Activated T-helper 2 cell treated with anti-CD3 and anti-CD28 coated beads, Interferon-gamma antibody, Interleukin-2, Interleukin-4, amounts not matched to agents 10 μg/mL and 5 μg/mL and 100 μg/mL, durations not matched to agents 14 hours and 24 hours and 36 hours (primary cell): ENCODE measurements at regions of chr1 and their contacts with region 1.

Region 1: GRCh38 chr1:200150720-200151119 is 123.2 kb downstream of the NR5A2 start:
- DNase-seq: no peak
- H3K4me3 Mint-ChIP-seq: no peak overlapping the region
- H3K27ac Mint-ChIP-seq: peak overlapping the region; percentile 73
- H3K4me1 Mint-ChIP-seq: peaks cover 47% of the 10 kb centered on the region
- H3K27me3 Mint-ChIP-seq: no peaks in the 10 kb centered on the region

Region 2: DNA sequence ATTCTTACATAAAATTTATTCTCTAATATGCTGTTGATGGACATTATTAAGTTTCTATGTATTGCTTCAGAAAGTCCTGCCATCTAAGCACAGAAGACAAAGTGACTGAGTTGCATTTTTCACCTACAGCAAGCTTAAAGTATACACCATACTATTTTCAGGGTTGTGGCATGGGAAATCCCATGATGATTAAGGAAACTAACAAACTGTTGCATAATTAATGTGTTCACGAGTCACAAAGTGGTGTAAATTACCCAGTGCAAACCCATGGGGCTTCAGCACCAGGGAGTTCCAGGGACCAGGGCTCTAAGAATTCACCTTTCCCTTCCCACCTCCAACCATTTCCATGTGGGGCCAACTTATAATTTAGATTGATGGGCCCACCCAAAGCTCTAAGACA is 205.1 kb before region 1 on chr1:
- intact Hi-C with region 1: loop called (anchors 1 kb)
- DNase-seq: no peak
- H3K4me3 Mint-ChIP-seq: no peak overlapping the region
- H3K27ac Mint-ChIP-seq: no peak overlapping the region
- H3K4me1 Mint-ChIP-seq: peaks cover 14% of the 10 kb centered on the region
- H3K27me3 Mint-ChIP-seq: peaks cover 47% of the 10 kb centered on the region

Region 3: GRCh38 chr1:200253774-200254495 is 103.2 kb after region 1 on chr1:
- intact Hi-C with region 1: loop called (anchors 1 kb)
- DNase-seq: no peak
- H3K4me3 Mint-ChIP-seq: no peak overlapping the region
- H3K27ac Mint-ChIP-seq: no peak overlapping the region
- H3K4me1 Mint-ChIP-seq: peaks cover 11% of the 10 kb centered on the region
- H3K27me3 Mint-ChIP-seq: peaks cover 33% of the 10 kb centered on the region

Region 4: GRCh38 chr1:200274116-200274515 is 123.4 kb after region 1 on chr1:
- intact Hi-C with region 1: loop called (anchors 5 kb)
- DNase-seq: no peak
- H3K4me3 Mint-ChIP-seq: no peak overlapping the region
- H3K27ac Mint-ChIP-seq: no peak overlapping the region
- H3K4me1 Mint-ChIP-seq: peaks cover 8% of the 10 kb centered on the region
- H3K27me3 Mint-ChIP-seq: peaks cover 18% of the 10 kb centered on the region

Region 5: DNA sequence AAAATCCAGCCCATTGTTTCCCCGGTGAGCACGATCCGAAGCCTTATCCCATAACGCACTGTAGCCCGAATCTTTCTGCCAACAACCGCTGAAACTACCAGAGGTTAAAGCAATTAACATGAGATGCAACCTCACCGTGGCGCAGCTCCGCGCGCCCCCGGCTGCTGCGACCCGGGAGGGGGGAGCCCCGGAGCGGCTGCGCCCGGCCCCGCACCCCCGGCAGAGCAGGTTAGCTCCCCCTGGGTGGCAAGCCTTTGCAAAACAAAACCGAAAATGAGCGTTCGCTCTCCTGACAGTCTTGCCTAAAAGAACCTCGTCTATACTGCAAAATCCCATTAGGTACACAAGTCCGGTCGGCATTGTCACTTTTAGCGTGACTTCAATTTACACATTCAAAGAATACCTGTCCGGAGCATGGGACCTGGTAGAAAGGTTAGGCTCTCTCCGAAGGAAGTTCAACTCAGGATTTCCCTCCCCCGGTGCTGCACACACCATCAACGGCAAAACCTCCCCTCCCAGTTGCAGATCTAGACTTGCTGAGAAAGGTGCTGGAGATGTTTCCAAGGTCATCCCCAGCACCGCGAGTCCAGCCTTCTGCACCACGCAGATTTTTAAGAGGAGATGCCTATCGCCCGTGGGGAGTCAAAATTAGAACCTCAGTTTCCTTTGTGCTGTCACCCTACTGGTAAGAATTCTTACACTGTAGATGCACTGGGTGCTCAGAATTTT is 151.6 kb after region 1 on chr1:
- intact Hi-C with region 1: loop called (anchors 5 kb)
- DNase-seq: peak; percentile 52
- H3K4me3 Mint-ChIP-seq: peak overlapping the region; percentile 77
- H3K27ac Mint-ChIP-seq: no peak overlapping the region
- H3K4me1 Mint-ChIP-seq: peaks cover 23% of the 10 kb centered on the region
- H3K27me3 Mint-ChIP-seq: peaks cover 54% of the 10 kb centered on the region

Region 6: DNA sequence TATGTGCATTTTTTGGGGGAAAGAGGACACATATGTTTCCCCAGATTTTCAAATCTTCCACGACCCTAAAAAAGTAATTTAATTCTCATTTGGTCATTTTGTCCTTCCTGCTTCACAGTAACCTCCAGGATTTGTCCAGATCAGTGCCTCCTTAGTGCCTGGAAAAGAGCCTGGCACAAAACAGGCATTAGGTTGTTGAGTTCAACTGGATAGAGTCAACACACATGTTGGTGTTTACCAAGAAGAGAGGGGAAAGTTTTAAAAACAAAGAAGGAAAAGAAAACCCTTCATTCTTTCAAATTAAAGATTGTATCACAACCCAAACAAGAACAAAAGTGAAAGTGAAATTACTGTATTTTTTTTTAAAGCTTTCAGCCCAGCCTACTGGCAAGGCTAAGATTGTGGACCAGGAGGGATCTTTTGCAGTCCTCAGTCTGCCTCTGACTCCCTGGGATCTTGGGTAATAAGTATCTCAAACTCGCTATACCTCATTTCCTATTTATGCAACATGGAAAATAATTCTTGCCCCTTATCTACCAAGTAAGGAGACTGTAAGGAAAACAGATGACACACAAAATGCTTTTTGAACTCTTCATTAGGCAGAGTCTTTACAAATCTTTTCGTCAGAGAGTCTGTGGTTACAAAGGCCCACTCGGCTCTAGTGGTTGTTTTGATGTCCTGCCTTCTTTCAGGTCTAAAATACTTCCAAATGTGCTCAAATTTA is 201.3 kb after region 1 on chr1:
- intact Hi-C with region 1: loop called (anchors 5 kb)
- DNase-seq: no peak
- H3K4me3 Mint-ChIP-seq: peak overlapping the region; percentile 34
- H3K27ac Mint-ChIP-seq: peak overlapping the region; percentile 24
- H3K4me1 Mint-ChIP-seq: peaks cover 44% of the 10 kb centered on the region
- H3K27me3 Mint-ChIP-seq: peaks cover 5% of the 10 kb centered on the region

Region 7: GRCh38 chr1:200448034-200448762 is 297.5 kb after region 1 on chr1:
- intact Hi-C with region 1: loop called (anchors 1 kb)
- DNase-seq: no peak
- H3K4me3 Mint-ChIP-seq: peak overlapping the region; percentile 6
- H3K27ac Mint-ChIP-seq: peak overlapping the region; percentile 92
- H3K4me1 Mint-ChIP-seq: peaks cover 38% of the 10 kb centered on the region
- H3K27me3 Mint-ChIP-seq: peaks cover 5% of the 10 kb centered on the region